Heart right ventricle (tissue), 16 donors: ENCODE measurements at regions of chr1 and their contacts with region 1.

Region 1: DNA sequence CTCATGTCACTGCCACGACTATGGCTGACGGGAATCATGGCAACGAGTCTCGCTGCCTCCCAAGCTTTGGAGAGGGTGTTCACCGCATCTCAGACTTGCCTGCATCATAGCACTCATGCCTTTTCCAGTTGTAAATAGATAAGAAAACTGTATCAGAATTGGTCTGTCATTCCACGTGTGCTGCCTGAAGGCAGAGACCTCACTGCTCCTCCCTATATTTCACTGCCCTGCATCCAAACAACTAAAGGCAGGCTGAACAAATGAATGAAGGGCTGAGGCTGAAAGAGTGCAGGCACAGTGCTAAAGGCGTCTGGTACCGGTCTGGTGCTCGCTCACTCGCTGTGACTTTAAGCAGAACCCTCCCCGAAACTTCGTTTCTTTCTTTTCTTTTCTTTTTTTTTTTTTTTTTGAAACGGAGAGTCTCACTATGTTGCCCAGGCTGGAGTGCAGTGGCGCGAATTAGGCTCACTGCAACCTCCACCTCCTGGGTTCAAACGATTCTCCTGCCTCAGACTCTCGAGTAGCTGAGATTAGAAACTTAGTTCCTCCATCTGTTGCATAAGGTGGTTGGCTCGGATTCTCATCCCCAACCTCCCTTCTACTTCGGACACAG is 542 bp downstream of the EIF2B3 start:
- DNase-seq: no peak
- ATAC-seq: peak in 6 of 8 donors; percentile 1 to 71 (median 8)
- H3K4me3 ChIP-seq: peak overlapping the region; percentile 55 to 89 (median 75)
- H3K27ac ChIP-seq: peak overlapping the region in 9 of 10 donors; percentile 29 to 84 (median 77)
- H3K4me1 ChIP-seq: peaks cover 2 to 27% (median 10%) of the 10 kb centered on the region in 9 donors
- H3K27me3 ChIP-seq: no peaks in the 10 kb centered on the region
- CTCF ChIP-seq: no peak

Region 2: DNA sequence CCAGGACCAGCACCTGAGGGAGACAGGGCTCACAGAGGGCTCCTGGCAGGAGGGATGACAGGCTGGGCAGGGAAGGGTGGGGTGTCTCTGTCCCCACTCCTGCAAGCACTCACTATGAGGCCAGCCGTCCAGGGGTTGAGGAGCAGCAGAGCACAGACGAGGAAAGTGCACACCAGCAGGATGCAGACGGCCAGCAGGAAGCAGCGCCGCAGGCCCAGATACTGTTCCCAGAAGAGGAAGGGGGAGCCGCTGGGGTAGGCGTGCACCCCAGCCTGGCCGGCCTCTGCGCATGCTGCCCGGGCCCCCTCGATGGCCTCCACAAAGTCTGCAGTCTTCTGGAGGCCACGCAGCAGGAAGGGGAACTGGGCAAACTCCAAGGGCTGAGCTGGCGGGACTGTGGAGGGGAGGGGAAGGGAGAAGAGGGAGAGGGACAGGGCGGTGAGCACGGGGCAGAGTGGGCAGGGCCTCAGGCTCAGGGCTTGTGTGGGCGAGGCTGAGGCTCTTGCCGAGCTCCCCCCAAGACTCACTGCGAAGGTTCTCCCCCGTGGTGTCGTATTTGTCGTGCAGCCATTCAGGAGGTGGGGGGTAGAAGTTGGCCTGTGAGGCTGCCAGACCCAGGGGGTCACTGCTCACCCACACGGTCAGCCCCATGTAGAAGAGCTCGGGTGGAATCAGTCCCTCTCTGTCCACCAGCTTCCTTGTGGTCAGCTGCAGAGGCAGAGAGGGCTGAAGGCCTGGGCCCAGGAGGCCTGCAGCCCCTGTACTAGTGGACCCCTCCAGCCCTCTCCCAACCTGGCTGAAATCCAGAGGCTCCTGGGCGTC is 159.3 kb before region 1 on chr1:
- intact Hi-C with region 1: loop called in 1 of 10 experiments (anchors 5 kb)
- DNase-seq: peak; percentile 66 to 77
- ATAC-seq: peak; percentile 65 to 93 (median 85)
- H3K4me3 ChIP-seq: peak overlapping the region in 4 of 10 donors; percentile 17 to 37 (median 25)
- H3K27ac ChIP-seq: peak overlapping the region in 9 of 10 donors; percentile 39 to 79 (median 53)
- H3K4me1 ChIP-seq: peaks cover 0 to 29% (median 10%) of the 10 kb centered on the region in 9 donors
- H3K27me3 ChIP-seq: no peaks in the 10 kb centered on the region
- CTCF ChIP-seq: no peak

Region 3: DNA sequence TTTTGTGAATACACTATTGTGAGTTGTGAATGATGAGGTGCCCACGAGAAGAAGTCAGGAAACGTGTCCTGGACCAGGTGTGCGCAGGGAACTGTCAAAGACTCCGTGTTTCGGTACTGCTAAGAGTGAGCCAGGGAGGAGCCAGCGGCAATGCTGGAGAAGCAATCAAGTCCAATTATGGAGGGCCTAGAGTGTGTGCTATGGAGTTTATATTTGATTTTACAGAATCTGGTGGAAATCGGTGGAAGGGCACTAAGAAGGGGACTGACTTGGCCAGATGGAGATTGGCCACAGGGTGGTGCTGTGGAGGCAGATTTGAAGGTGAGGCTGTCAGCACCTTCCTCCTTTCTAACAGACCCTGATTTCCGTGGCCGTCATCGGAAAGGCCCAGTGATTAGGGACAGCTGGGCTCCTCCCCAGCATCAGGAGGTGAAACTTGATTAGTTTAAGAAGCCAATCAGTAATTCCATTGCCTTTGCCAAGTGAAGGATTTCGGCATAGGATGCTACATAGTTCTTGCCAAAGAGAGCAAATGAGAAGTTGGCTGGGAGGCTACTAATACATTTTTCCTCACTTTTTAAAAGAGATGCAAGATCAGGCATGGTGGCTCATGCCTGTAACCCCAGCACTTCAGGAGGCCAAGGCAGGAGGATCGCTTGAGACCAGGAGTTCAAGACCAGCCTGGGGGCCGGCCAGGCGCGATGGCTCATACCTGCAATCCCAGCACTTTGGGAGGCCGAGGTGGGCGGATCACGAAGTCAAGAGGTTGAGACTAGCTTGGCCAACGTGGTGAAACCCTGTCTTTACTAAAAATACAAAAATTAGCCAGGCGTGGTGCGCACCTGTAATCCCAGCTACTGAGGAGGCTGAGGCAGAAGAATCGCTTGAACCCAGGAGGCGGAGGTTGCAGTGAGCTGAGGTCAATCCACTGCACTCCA is 149.8 kb before region 1 on chr1:
- intact Hi-C with region 1: loop called in 4 of 10 experiments (anchors 5 kb)
- DNase-seq: peak; percentile 85 to 87
- ATAC-seq: peak; percentile 78 to 89 (median 84)
- H3K4me3 ChIP-seq: no peak overlapping the region
- H3K27ac ChIP-seq: peak overlapping the region in 1 of 10 donors; percentile 8
- H3K4me1 ChIP-seq: peaks cover 0 to 19% (median 0%) of the 10 kb centered on the region in 9 donors
- H3K27me3 ChIP-seq: no peaks in the 10 kb centered on the region
- CTCF ChIP-seq: peak; percentile 74 to 96 (median 86)

Region 4: GRCh38 chr1:44842862-44843655 is 142.8 kb before region 1 on chr1 and contains the start of gene PTCH2:
- intact Hi-C with region 1: loop called in 3 of 10 experiments (anchors 5 kb)
- DNase-seq: peak; percentile 71 to 72
- ATAC-seq: peak; percentile 85 to 93 (median 87)
- H3K4me3 ChIP-seq: peak within 1 kb of the TSS; percentile 5 to 74 (median 62)
- H3K27ac ChIP-seq: peak within 1 kb of the TSS in 8 of 10 donors; percentile 24 to 78 (median 60)
- H3K4me1 ChIP-seq: peaks cover 0 to 20% (median 8%) of the 10 kb centered on the region in 9 donors
- H3K27me3 ChIP-seq: peaks cover 0 to 19% (median 0%) of the 10 kb centered on the region in 7 donors
- CTCF ChIP-seq: no peak
- total RNA-seq, gene PTCH2: 0.32 to 1.1 (median 0.44) TPM

Region 5: DNA sequence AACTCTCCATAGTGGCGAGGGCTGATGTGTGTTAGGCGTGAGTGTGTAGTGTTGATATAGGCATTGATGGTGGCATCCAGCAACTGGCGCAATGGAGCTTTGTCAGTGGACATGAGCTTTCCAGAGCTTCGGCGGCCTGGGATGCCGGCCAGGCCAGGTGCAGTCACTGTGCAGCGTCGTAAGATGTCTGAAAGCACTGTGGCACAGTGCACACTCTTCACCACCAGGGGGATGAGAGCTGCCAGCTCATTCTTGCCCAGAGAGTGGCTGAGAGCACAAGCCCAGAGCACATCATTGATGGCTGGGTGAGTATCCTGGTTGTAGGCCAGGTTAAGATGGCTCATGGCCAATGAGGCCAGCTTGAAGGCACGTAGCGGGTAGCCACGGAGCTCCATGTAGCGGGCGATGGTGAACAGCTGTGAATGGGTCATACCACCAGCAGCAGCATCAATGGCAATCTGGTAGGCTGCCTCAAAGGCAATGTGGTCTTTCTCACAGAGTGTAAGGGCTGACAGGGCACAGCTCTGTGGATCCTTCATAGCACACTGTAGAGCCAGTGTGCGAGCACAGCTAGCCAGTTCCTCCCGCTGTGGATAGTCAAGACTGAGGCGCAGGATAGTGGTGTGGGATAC is 32.9 kb after region 1 on chr1:
- intact Hi-C with region 1: no loop called
- DNase-seq: no peak
- ATAC-seq: peak in 7 of 8 donors; percentile 51 to 73 (median 63)
- H3K4me3 ChIP-seq: no peak overlapping the region
- H3K27ac ChIP-seq: no peak overlapping the region
- H3K4me1 ChIP-seq: peaks cover 0 to 13% (median 7%) of the 10 kb centered on the region in 9 donors
- H3K27me3 ChIP-seq: no peaks in the 10 kb centered on the region
- CTCF ChIP-seq: peak; percentile 17 to 77 (median 59)

Region 6: DNA sequence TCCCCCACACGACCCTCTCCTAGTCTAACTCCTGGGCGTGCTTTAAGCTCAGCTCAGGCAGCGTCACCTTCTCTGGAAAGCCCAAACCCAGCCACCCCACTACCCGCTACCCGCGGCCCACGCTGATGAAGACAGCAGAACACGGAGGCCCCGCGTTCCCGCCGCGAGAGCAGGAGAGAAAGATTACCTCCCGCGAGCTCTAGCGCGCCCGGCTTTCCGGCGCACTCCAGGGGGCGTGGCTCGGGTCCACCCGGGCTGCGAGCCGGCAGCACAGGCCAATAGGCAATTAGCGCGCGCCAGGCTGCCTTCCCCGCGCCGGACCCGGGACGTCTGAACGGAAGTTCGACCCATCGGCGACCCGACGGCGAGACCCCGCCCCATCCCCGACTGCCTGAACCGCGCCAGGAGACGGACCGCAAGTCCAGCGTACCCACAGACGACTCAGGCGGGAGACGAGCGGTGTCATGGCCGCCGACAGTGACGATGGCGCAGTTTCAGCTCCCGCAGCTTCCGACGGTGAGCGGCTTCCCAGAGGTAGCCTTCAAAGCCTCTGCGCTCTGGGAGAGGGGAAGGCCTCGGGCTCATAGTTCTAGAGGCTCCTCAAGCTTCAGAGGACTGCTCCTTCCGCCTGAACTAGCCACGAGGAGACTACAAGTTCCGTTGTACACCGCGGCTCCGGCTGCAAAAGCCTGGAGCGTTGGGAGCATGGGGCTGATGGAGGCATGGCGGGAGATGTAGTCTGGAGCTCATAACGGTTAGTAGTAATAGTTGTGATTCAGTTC is 354.1 kb after region 1 on chr1 and contains the starts of genes MUTYH and TOE1:
- intact Hi-C with region 1: no loop called
- DNase-seq: peak; percentile 93
- ATAC-seq: peak; percentile 95 to 97 (median 96)
- H3K4me3 ChIP-seq: peak within 1 kb of the TSS; percentile 58 to 91 (median 82)
- H3K27ac ChIP-seq: peak within 1 kb of the TSS; percentile 85 to 99 (median 96)
- H3K4me1 ChIP-seq: peaks cover 11 to 35% (median 25%) of the 10 kb centered on the region in 9 donors
- H3K27me3 ChIP-seq: no peaks in the 10 kb centered on the region
- CTCF ChIP-seq: peak in 3 of 9 donors; percentile 4 to 34 (median 31)
- total RNA-seq, gene MUTYH: 6.0 to 10.2 (median 8.9) TPM
- total RNA-seq, gene TOE1: 2.7 to 6.6 (median 4.1) TPM